Activated CD4-positive, alpha-beta T cell treated with anti-CD3 and anti-CD28 coated beads for 36 hours (primary cell): ENCODE measurements at regions of chr17 and their contacts with region 1.

Region 1: GRCh38 chr17:40317880-40318829 is 9.2 kb downstream of the RARA start:
- DNase-seq: peak; percentile 96
- ATAC-seq: peak; percentile 72
- H3K4me3 Mint-ChIP-seq: peak overlapping the region; percentile 85
- H3K27ac Mint-ChIP-seq: peak overlapping the region; percentile 91
- H3K4me1 Mint-ChIP-seq: peaks cover 75% of the 10 kb centered on the region
- H3K27me3 Mint-ChIP-seq: no peaks in the 10 kb centered on the region

Region 2: GRCh38 chr17:39769974-39770587 is 548.1 kb before region 1 on chr17:
- CTCF ChIA-PET with region 1: no interaction called
- POLR2A ChIA-PET with region 1: no interaction called
- intact Hi-C with region 1: loop called in 1 of 2 experiments (anchors 10 kb)
- DNase-seq: peak; percentile 78
- ATAC-seq: peak; percentile 80
- H3K4me3 Mint-ChIP-seq: peak overlapping the region; percentile 7
- H3K27ac Mint-ChIP-seq: peak overlapping the region; percentile 82
- H3K4me1 Mint-ChIP-seq: peaks cover 96% of the 10 kb centered on the region
- H3K27me3 Mint-ChIP-seq: no peaks in the 10 kb centered on the region

Region 3: DNA sequence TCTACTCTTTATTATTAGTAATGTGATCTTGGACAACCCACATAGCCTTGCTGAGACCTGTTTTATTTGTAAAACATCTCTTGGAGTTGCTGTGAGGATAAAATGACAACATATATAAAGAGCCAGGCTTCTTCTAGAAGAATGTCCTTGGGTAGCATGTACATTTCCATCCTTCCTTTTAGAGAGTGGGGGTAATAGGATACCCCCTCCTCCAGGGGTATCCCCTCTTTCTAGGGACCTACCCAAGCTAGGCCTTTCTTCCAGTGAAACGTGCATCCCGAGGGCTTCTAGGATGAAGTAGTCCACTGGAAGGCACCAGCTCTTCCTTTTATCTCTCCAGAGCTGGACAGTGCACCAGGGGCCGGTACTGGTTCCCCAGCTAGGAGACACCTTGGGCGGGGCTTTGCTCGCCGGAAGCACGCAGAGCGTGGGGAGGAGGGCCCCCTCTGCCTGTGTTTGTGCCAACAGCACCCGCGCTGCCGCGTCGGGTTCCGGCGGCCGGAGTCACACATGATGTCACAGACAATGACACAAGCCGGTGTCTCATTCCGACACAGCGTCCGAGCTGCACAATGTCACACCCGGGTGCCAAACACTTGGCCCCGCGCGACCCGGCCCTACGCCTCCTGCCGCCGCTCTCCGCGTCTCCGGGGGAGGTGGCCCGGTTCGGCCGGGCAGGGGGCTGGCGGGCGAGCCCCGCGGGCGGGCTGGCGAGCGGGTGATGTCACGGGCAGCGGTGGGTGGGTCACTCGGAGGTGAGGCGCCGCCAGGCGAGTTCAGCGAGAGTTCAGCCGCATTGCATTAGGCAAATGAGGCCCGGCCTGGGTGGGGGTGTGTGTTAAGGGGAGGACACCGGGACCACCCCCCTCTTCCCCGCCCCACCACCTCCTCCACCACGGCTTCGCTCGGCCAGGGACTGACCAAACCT is 23.0 kb after region 1 on chr17:
- CTCF ChIA-PET with region 1: interaction called, 11 read pairs
- POLR2A ChIA-PET with region 1: no interaction called
- intact Hi-C with region 1: loop called (anchors 1 kb)
- DNase-seq: peak; percentile 93
- ATAC-seq: peak; percentile 87
- H3K4me3 Mint-ChIP-seq: peak overlapping the region; percentile 60
- H3K27ac Mint-ChIP-seq: peak overlapping the region; percentile 85
- H3K4me1 Mint-ChIP-seq: peaks cover 74% of the 10 kb centered on the region
- H3K27me3 Mint-ChIP-seq: no peaks in the 10 kb centered on the region

Region 4: GRCh38 chr17:40417609-40418427 is 99.7 kb after region 1 on chr17 and contains the start of gene TOP2A:
- CTCF ChIA-PET with region 1: no interaction called
- POLR2A ChIA-PET with region 1: no interaction called
- intact Hi-C with region 1: no loop called
- DNase-seq: peak; percentile 95
- ATAC-seq: peak; percentile 99
- H3K4me3 Mint-ChIP-seq: peak within 1 kb of the TSS; percentile 86
- H3K27ac Mint-ChIP-seq: peak within 1 kb of the TSS; percentile 89
- H3K4me1 Mint-ChIP-seq: peaks cover 24% of the 10 kb centered on the region
- H3K27me3 Mint-ChIP-seq: no peaks in the 10 kb centered on the region
- total RNA-seq, gene TOP2A: 245 to 322 TPM

Region 5: DNA sequence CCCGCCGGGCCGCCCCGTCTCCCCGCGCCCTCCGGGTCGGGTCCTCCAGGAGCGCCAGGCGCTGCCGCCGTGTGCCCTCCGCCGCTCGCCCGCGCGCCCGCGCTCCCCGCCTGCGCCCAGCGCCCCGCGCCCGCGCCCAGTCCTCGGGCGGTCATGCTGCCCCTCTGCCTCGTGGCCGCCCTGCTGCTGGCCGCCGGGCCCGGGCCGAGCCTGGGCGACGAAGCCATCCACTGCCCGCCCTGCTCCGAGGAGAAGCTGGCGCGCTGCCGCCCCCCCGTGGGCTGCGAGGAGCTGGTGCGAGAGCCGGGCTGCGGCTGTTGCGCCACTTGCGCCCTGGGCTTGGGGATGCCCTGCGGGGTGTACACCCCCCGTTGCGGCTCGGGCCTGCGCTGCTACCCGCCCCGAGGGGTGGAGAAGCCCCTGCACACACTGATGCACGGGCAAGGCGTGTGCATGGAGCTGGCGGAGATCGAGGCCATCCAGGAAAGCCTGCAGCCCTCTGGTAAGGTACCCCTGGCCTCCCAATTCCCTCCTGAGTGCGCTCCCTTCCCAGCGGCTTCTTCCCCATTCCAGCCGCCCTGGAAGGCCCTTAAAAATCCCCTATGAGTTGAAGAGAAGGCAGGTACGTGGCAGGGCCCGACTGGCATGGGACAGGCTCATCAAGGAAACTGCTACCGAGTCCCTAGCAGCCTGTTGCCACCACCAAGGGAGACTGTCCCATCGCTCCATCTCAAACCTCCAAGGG is 125.6 kb after region 1 on chr17:
- CTCF ChIA-PET with region 1: no interaction called
- POLR2A ChIA-PET with region 1: no interaction called
- intact Hi-C with region 1: no loop called
- DNase-seq: peak; percentile 83
- ATAC-seq: peak; percentile 68
- H3K4me3 Mint-ChIP-seq: peak overlapping the region; percentile 70
- H3K27ac Mint-ChIP-seq: peak overlapping the region; percentile 88
- H3K4me1 Mint-ChIP-seq: peaks cover 45% of the 10 kb centered on the region
- H3K27me3 Mint-ChIP-seq: peaks cover 5% of the 10 kb centered on the region

Region 6: DNA sequence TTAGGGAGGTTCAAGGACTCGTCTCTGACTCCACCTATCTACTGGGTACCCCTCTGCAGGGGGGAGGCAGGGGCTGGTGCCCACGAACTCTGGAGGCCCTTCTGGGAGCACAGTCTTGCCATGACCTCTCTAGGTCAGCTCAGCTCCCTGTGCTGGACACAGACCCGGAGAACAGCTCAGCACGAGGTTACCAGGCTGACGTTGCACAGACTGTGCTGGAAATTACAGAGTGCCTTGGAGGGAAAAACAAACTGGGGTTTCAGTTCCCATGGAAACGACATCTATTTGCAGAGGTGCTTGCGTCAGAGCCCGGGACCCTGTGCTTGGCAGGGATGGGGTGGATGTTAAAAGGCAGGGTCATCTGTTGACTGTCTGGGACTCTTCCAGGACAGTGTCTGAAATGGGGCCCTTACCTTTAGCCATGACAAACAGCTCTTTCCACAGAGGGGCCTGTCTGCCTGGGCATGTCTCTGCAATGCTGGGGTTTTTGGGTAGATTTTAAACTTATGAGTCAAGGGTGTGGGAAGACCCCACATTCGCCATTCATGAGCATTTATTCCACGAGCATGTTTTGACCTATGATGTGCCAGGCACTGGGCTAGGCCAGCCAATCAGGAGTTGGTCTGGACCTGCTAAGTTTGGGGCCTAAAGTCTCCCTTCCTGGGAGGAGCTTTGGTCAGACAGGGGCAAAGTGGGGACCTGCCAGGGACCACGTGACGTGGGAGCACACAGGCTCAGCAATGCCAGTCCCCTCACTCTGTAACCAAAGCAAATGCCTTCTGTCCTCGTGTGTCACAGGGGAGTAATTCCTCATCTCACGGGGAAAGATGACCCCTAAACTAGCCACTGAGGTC is 224.6 kb after region 1 on chr17:
- CTCF ChIA-PET with region 1: interaction called, 5 read pairs
- POLR2A ChIA-PET with region 1: interaction called, 7 read pairs
- intact Hi-C with region 1: loop called in 1 of 2 experiments (anchors 5 kb)
- DNase-seq: peak; percentile 76
- ATAC-seq: peak; percentile 52
- H3K4me3 Mint-ChIP-seq: peak overlapping the region; percentile 63
- H3K27ac Mint-ChIP-seq: peak overlapping the region; percentile 98
- H3K4me1 Mint-ChIP-seq: peaks cover 88% of the 10 kb centered on the region
- H3K27me3 Mint-ChIP-seq: no peaks in the 10 kb centered on the region

Region 7: DNA sequence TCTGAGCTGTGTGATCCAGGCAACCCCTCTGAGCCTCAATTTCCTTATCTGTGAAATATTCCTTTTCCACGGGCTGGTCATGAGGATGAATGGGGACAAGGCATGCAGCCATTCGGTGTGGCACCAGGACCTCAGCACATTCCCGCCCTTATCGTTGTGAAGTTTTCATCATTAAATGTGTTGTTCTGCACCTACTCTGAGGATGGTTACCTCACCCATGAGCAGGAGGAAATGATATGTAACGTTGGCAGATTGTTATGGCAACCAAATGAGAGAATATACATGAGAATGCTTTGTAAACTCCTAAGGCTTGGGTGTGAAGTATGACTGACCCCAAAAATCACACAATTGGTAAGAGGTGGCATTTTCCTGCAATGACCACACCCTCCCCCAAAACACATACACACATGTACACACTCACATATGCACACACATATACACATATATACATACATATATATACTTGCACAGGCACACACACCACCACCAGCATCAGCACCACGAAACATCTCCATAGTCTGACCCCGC is 290.0 kb after region 1 on chr17:
- CTCF ChIA-PET with region 1: no interaction called
- POLR2A ChIA-PET with region 1: no interaction called
- intact Hi-C with region 1: loop called in 1 of 2 experiments (anchors 2 kb)
- DNase-seq: peak; percentile 52
- ATAC-seq: peak; percentile 61
- H3K4me3 Mint-ChIP-seq: peak overlapping the region; percentile 39
- H3K27ac Mint-ChIP-seq: peak overlapping the region; percentile 86
- H3K4me1 Mint-ChIP-seq: peaks cover 98% of the 10 kb centered on the region
- H3K27me3 Mint-ChIP-seq: no peaks in the 10 kb centered on the region

Region 8: DNA sequence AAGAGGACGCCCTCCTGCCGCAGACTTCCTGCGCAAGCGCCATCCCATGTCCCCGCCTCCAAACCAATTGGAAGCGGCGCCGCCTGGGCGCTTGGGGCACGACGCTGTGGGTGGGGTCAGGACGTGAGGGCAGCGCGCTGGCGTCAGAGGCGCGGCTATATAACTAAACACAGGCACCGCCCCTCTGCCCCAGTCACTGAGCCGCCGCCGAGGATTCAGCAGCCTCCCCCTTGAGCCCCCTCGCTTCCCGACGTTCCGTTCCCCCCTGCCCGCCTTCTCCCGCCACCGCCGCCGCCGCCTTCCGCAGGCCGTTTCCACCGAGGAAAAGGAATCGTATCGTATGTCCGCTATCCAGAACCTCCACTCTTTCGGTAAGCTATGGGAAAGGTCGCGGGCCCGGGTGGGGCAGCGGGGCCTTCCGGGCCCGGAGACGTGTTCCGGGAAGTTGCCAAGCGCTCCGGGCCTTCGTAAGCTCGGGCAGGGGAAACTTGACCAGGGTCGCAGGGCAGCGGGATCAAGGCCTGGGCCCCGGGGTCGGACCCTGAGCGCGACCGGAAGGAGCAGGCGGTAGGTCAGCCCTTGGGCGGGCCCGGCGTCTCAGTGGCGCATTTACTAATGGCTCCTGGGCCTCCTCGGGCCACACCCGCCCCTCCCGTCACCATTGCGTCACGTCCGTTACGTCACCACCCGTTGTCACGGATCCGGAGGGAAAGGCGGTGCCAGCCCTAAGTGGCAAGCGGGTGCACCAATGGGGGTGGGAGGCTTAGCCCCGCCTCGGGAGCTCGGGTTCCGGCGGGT is 1370.7 kb after region 1 on chr17 and contains the start of gene EIF1:
- CTCF ChIA-PET with region 1: no interaction called
- POLR2A ChIA-PET with region 1: no interaction called
- intact Hi-C with region 1: loop called in 1 of 2 experiments (anchors 1 kb)
- DNase-seq: peak; percentile 100
- ATAC-seq: peak; percentile 81
- H3K4me3 Mint-ChIP-seq: peak within 1 kb of the TSS; percentile 97
- H3K27ac Mint-ChIP-seq: peak within 1 kb of the TSS; percentile 95
- H3K4me1 Mint-ChIP-seq: peaks cover 20% of the 10 kb centered on the region
- H3K27me3 Mint-ChIP-seq: no peaks in the 10 kb centered on the region
- total RNA-seq, gene EIF1: 869 to 977 TPM